K562 (cell line): ENCODE measurements at regions of chr17 and their contacts with region 1.

Region 1: GRCh38 chr17:28812091-28812747 is 30.4 kb downstream of the FAM222B start:
- DNase-seq: peak; percentile 99 to 100 (median 99)
- ATAC-seq: peak; percentile 99
- H3K4me3 ChIP-seq: peak overlapping the region; percentile 63
- H3K27ac ChIP-seq: peak overlapping the region; percentile 91
- H3K4me1 ChIP-seq: peaks cover 42 to 51% of the 10 kb centered on the region in 2 experiments
- H3K27me3 ChIP-seq: no peaks in the 10 kb centered on the region
- CTCF ChIP-seq: no peak
- EP300 ChIP-seq: 0 out of 2 replicates have a peak, but pooled peaks have one; percentile 3
- POLR2A ChIP-seq: peak; percentile 71
- RAD21 ChIP-seq: no peak

Region 2: DNA sequence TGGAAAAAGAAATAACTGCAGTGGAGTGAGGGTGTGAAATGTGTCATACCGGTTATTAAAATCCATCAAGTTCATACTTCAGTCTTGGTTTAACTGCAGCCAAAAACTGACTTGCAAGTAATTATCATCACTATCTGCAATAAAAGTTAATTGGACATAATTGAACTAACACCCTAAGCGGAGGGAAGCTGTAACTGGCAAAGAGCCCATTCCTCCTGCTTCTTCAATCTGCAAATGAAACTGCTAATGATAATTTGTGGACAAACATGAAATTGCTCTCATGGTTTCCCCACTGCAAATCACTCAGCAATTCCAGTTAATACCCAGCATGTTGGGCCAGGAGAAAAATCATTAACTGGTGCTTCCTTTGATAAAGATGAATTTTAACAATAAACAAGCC is 16.2 kb before region 1 on chr17:
- CTCF ChIA-PET with region 1: no interaction called
- POLR2A ChIA-PET with region 1: interaction called, 21 read pairs
- in situ Hi-C with region 1: no loop called
- intact Hi-C with region 1: no loop called
- DNase-seq: no peak
- ATAC-seq: no peak
- H3K4me3 ChIP-seq: no peak overlapping the region
- H3K27ac ChIP-seq: no peak overlapping the region
- H3K4me1 ChIP-seq: peaks cover 16 to 21% of the 10 kb centered on the region in 2 experiments
- H3K27me3 ChIP-seq: no peaks in the 10 kb centered on the region
- CTCF ChIP-seq: no peak
- EP300 ChIP-seq: no peak
- POLR2A ChIP-seq: no peak
- RAD21 ChIP-seq: no peak

Region 3: GRCh38 chr17:29059281-29059680 is 247.1 kb after region 1 on chr17:
- CTCF ChIA-PET with region 1: no interaction called
- POLR2A ChIA-PET with region 1: no interaction called
- in situ Hi-C with region 1: no loop called
- intact Hi-C with region 1: no loop called
- DNase-seq: no peak
- ATAC-seq: no peak
- H3K4me3 ChIP-seq: no peak overlapping the region
- H3K27ac ChIP-seq: no peak overlapping the region
- H3K4me1 ChIP-seq: peaks cover 2 to 6% of the 10 kb centered on the region in 2 experiments; a peak in 2 of 5 replicates
- H3K27me3 ChIP-seq: peaks cover 18 to 35% of the 10 kb centered on the region in 2 experiments; a peak in 4 of 5 replicates
- CTCF ChIP-seq: no peak
- EP300 ChIP-seq: no peak
- POLR2A ChIP-seq: no peak
- RAD21 ChIP-seq: no peak